CD4-positive, alpha-beta memory T cell (primary cell): ENCODE measurements at regions of chr22 and their contacts with region 1.

Region 1: GRCh38 chr22:17638432-17639246 is at the start of gene BCL2L13:
- DNase-seq: peak; percentile 86 to 91 (median 89)
- H3K4me3 ChIP-seq: peak within 1 kb of the TSS; percentile 71 to 87
- H3K4me3 Mint-ChIP-seq: peak within 1 kb of the TSS; percentile 89 to 93 (median 92)
- H3K27ac ChIP-seq: peak within 1 kb of the TSS; percentile 98
- H3K27ac Mint-ChIP-seq: peak within 1 kb of the TSS; percentile 94 to 99 (median 98)
- H3K4me1 ChIP-seq: peaks cover 23% of the 10 kb centered on the region
- H3K4me1 Mint-ChIP-seq: peaks cover 17 to 45% (median 23%) of the 10 kb centered on the region in 4 donors
- H3K27me3 ChIP-seq: no peaks in the 10 kb centered on the region
- H3K27me3 Mint-ChIP-seq: no peaks in the 10 kb centered on the region
- total RNA-seq, gene BCL2L13: 28.3 to 32.6 TPM

Region 2: GRCh38 chr22:17477391-17477833 is 161.2 kb before region 1 on chr22:
- CTCF ChIA-PET with region 1: no interaction called
- POLR2A ChIA-PET with region 1: no interaction called
- intact Hi-C with region 1: no loop called
- DNase-seq: no peak
- H3K4me3 ChIP-seq: no peak overlapping the region
- H3K4me3 Mint-ChIP-seq: no peak overlapping the region
- H3K27ac ChIP-seq: no peak overlapping the region
- H3K27ac Mint-ChIP-seq: no peak overlapping the region
- H3K4me1 ChIP-seq: no peaks in the 10 kb centered on the region
- H3K4me1 Mint-ChIP-seq: no peaks in the 10 kb centered on the region
- H3K27me3 ChIP-seq: no peaks in the 10 kb centered on the region
- H3K27me3 Mint-ChIP-seq: peaks cover 29 to 33% of the 10 kb centered on the region in 2 donors

Region 3: GRCh38 chr22:17540481-17540880 is 98.2 kb before region 1 on chr22:
- CTCF ChIA-PET with region 1: no interaction called
- POLR2A ChIA-PET with region 1: no interaction called
- intact Hi-C with region 1: no loop called
- DNase-seq: no peak
- H3K4me3 ChIP-seq: no peak overlapping the region
- H3K4me3 Mint-ChIP-seq: no peak overlapping the region
- H3K27ac ChIP-seq: no peak overlapping the region
- H3K27ac Mint-ChIP-seq: no peak overlapping the region
- H3K4me1 ChIP-seq: no peaks in the 10 kb centered on the region
- H3K4me1 Mint-ChIP-seq: no peaks in the 10 kb centered on the region
- H3K27me3 ChIP-seq: no peaks in the 10 kb centered on the region
- H3K27me3 Mint-ChIP-seq: peaks cover 0 to 4% of the 10 kb centered on the region in 2 donors

Region 4: DNA sequence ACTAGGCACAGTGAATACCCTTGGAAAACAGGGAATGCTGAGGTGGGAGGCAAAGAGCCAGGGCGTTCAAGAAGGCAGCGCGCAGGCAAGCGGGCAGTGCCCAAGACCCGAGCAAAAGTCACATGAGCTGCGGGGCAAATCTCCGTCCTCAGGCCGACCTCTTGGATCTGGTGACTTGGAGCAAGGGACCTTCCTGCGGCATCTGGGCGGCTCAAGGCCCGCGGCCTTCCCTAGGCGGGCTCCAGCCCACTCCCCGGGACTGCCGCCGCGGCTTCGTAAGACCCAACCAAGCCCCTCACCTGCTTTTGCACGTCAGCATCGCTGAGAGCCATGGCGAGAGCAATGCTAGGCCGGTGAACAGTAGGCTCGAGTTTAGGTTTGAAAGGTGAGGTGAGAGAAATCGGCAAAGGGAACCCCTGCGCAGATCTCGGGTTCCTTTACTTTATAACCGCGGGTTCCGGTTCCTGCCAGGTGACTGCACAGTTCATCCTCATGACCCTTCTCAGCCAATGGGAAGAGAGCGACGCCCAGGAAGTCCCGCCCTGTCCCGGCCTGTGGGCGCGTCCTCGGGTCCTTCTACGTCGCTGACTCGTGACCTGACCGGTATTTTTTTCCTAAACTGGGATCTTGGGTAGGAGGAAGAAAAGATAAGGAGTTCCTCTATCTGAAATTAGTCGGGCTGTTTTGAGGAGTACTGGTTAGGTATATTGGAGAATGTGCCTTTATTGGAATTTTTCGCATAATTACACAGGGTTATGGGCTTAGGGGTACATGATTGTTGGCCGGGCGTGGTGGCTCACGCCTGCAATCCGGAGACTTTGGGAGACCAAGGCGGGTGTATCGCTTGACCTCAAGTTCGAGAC is 10.1 kb before region 1 on chr22 and contains the start of gene ATP6V1E1:
- CTCF ChIA-PET with region 1: interaction called, 3 read pairs
- POLR2A ChIA-PET with region 1: interaction called, 13 read pairs
- intact Hi-C with region 1: loop called (anchors 1 kb)
- DNase-seq: peak; percentile 93 to 97 (median 94)
- H3K4me3 ChIP-seq: peak within 1 kb of the TSS; percentile 80 to 95
- H3K4me3 Mint-ChIP-seq: peak within 1 kb of the TSS; percentile 95 to 99 (median 97)
- H3K27ac ChIP-seq: peak within 1 kb of the TSS; percentile 95
- H3K27ac Mint-ChIP-seq: peak within 1 kb of the TSS; percentile 96 to 99 (median 98)
- H3K4me1 ChIP-seq: peaks cover 50% of the 10 kb centered on the region
- H3K4me1 Mint-ChIP-seq: peaks cover 9 to 45% (median 25%) of the 10 kb centered on the region in 4 donors
- H3K27me3 ChIP-seq: no peaks in the 10 kb centered on the region
- H3K27me3 Mint-ChIP-seq: no peaks in the 10 kb centered on the region
- total RNA-seq, gene ATP6V1E1: 88.0 to 88.7 TPM

Region 5: DNA sequence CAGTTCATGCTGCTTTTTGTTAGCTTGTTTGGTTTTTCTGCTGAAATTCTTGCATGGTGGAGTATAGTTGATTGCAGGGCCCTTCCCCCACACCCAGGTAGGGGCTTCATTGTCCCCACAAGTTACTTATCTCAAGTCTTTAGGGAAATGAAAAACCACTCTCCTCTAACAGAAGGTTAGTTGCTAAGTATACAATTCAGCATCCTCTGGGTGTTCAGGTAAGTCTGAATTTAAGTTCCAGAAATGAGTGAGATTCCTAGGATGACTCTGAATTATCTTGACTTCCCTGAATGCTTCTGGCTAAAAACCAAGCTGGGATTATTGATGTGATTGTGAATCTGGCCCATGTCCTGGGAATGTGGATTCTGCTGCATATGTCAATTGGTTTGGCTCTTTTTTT is 40.2 kb after region 1 on chr22:
- CTCF ChIA-PET with region 1: no interaction called
- POLR2A ChIA-PET with region 1: no interaction called
- intact Hi-C with region 1: no loop called
- DNase-seq: no peak
- H3K4me3 ChIP-seq: no peak overlapping the region
- H3K4me3 Mint-ChIP-seq: no peak overlapping the region
- H3K27ac ChIP-seq: no peak overlapping the region
- H3K27ac Mint-ChIP-seq: no peak overlapping the region
- H3K4me1 ChIP-seq: no peaks in the 10 kb centered on the region
- H3K4me1 Mint-ChIP-seq: peaks cover 9 to 11% (median 10%) of the 10 kb centered on the region in 4 donors
- H3K27me3 ChIP-seq: no peaks in the 10 kb centered on the region
- H3K27me3 Mint-ChIP-seq: no peaks in the 10 kb centered on the region

Region 6: GRCh38 chr22:17773606-17774205 is 135.1 kb after region 1 on chr22:
- CTCF ChIA-PET with region 1: no interaction called
- POLR2A ChIA-PET with region 1: interaction called, 5 read pairs
- intact Hi-C with region 1: loop called (anchors 5 kb)
- DNase-seq: peak; percentile 57 to 77 (median 60)
- H3K4me3 ChIP-seq: peak overlapping the region; percentile 51 to 61
- H3K4me3 Mint-ChIP-seq: peak overlapping the region; percentile 87 to 96 (median 90)
- H3K27ac ChIP-seq: peak overlapping the region; percentile 57
- H3K27ac Mint-ChIP-seq: peak overlapping the region; percentile 63 to 95 (median 88)
- H3K4me1 ChIP-seq: peaks cover 70% of the 10 kb centered on the region
- H3K4me1 Mint-ChIP-seq: peaks cover 40 to 88% (median 65%) of the 10 kb centered on the region in 4 donors
- H3K27me3 ChIP-seq: no peaks in the 10 kb centered on the region
- H3K27me3 Mint-ChIP-seq: no peaks in the 10 kb centered on the region

Region 7: GRCh38 chr22:17785185-17786184 is 146.8 kb after region 1 on chr22:
- CTCF ChIA-PET with region 1: no interaction called
- POLR2A ChIA-PET with region 1: no interaction called
- intact Hi-C with region 1: no loop called
- DNase-seq: peak; percentile 56 to 66 (median 65)
- H3K4me3 ChIP-seq: no peak overlapping the region
- H3K4me3 Mint-ChIP-seq: no peak overlapping the region
- H3K27ac ChIP-seq: no peak overlapping the region
- H3K27ac Mint-ChIP-seq: peak overlapping the region in 2 of 7 donors; percentile 43 to 55
- H3K4me1 ChIP-seq: peaks cover 26% of the 10 kb centered on the region
- H3K4me1 Mint-ChIP-seq: peaks cover 7 to 27% (median 12%) of the 10 kb centered on the region in 4 donors
- H3K27me3 ChIP-seq: no peaks in the 10 kb centered on the region
- H3K27me3 Mint-ChIP-seq: no peaks in the 10 kb centered on the region